ENCODE measurements at regions of chr13 and their contacts with region 1.

Region 1: GRCh38 chr13:38530492-38530891 is 156.4 kb upstream of the FREM2 start:
- DNase-seq: peak; percentile 33
- ATAC-seq: peak; percentile 65; the same call in 1 of the 2 replicates
- H3K4me3 ChIP-seq: no peak overlapping the region
- H3K27ac ChIP-seq: no peak overlapping the region
- H3K4me1 ChIP-seq: no peaks in the 10 kb centered on the region
- H3K27me3 ChIP-seq: peaks cover 36% of the 10 kb centered on the region
- CTCF ChIP-seq: peak; percentile 67

Region 2: DNA sequence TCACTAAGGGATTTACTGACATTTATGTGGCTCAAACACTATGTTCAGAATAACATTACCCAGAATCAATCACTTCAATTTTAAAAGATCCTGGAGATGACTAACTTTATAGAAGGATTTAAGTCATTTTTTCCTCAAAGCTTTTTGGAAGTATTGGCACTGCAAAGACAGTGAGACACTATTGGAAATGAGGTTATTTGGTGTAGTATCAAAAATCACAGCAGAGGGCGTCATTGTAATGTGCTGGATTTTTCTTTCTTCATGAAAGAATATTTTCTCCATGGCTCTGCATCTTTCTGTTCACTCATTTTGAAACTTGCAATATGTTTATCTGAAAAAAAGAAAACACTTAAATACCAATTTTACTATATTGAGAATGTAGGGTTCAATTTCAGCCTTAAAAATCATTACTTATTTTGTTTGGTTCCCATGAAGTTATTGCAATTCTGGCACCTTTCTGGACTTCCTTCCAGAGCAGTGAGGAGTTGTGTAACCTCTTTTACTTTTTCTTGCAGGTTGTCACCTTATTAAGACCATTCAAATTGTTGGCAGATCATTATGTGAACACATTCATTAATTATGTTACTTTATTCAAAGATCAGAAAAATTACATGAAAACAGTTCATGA is 1421.3 kb before region 1 on chr13:
- CTCF ChIA-PET with region 1: no interaction called
- POLR2A ChIA-PET with region 1: no interaction called
- intact Hi-C with region 1: loop called (anchors 2 kb)
- DNase-seq: peak; percentile 50
- ATAC-seq: peak; percentile 55; the same call in 1 of the 2 replicates
- H3K4me3 ChIP-seq: no peak overlapping the region
- H3K27ac ChIP-seq: no peak overlapping the region
- H3K4me1 ChIP-seq: peaks cover 10% of the 10 kb centered on the region; the same call in 1 of the 2 replicates
- H3K27me3 ChIP-seq: peaks cover 5% of the 10 kb centered on the region; the same call in 1 of the 2 replicates
- CTCF ChIP-seq: peak; percentile 70

Region 3: GRCh38 chr13:37769078-37769477 is 761.4 kb before region 1 on chr13:
- CTCF ChIA-PET with region 1: no interaction called
- POLR2A ChIA-PET with region 1: no interaction called
- intact Hi-C with region 1: loop called (anchors 1 kb)
- DNase-seq: peak; percentile 21
- ATAC-seq: no peak
- H3K4me3 ChIP-seq: no peak overlapping the region
- H3K27ac ChIP-seq: no peak overlapping the region
- H3K4me1 ChIP-seq: no peaks in the 10 kb centered on the region
- H3K27me3 ChIP-seq: peaks cover 25% of the 10 kb centered on the region; the same call in 1 of the 2 replicates
- CTCF ChIP-seq: peak; percentile 37

Region 4: DNA sequence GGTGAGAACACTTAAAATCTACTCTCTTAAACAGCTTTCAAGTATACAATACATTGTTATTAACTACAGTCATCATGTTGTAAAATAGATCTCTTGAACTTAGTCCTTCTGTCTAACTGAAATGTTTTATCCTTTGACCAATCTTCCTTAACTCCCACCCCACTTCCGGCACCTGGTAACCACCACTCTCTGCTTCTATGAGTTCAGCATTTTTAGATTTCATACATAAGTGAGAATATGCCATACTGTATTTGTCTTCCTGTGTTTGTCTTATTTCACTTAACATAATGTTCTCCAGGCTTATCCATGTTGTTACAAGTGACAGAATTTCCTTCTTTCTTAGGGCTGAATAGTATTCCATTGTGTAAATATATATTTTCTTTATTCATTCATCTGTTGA is 516.8 kb before region 1 on chr13:
- CTCF ChIA-PET with region 1: no interaction called
- POLR2A ChIA-PET with region 1: no interaction called
- intact Hi-C with region 1: loop called (anchors 10 kb)
- DNase-seq: no peak
- ATAC-seq: no peak
- H3K4me3 ChIP-seq: no peak overlapping the region
- H3K27ac ChIP-seq: no peak overlapping the region
- H3K4me1 ChIP-seq: no peaks in the 10 kb centered on the region
- H3K27me3 ChIP-seq: peaks cover 2% of the 10 kb centered on the region; the same call in 1 of the 2 replicates
- CTCF ChIP-seq: no peak

Region 5: GRCh38 chr13:38349390-38350113 is 180.9 kb before region 1 on chr13 and contains the start of gene UFM1:
- CTCF ChIA-PET with region 1: no interaction called
- POLR2A ChIA-PET with region 1: no interaction called
- intact Hi-C with region 1: loop called (anchors 10 kb)
- DNase-seq: peak; percentile 83
- ATAC-seq: peak; percentile 94
- H3K4me3 ChIP-seq: peak within 1 kb of the TSS; percentile 89
- H3K27ac ChIP-seq: peak within 1 kb of the TSS; percentile 82
- H3K4me1 ChIP-seq: peaks cover 16% of the 10 kb centered on the region
- H3K27me3 ChIP-seq: no peaks in the 10 kb centered on the region
- CTCF ChIP-seq: no peak
- total RNA-seq, gene UFM1: 30.3 and 35.9 TPM in 2 replicates

Region 6: GRCh38 chr13:38697628-38698333 is 167.3 kb after region 1 on chr13:
- CTCF ChIA-PET with region 1: no interaction called
- POLR2A ChIA-PET with region 1: no interaction called
- intact Hi-C with region 1: no loop called
- DNase-seq: peak; percentile 5
- ATAC-seq: peak; percentile 49; the same call in 1 of the 2 replicates
- H3K4me3 ChIP-seq: no peak overlapping the region
- H3K27ac ChIP-seq: no peak overlapping the region
- H3K4me1 ChIP-seq: no peaks in the 10 kb centered on the region
- H3K27me3 ChIP-seq: peaks cover 13% of the 10 kb centered on the region; the same call in 1 of the 2 replicates
- CTCF ChIP-seq: no peak